Activated B cell treated with CpG ODN at 0.5 μM for 24 hours (primary cell): ENCODE measurements at regions of chr22 and their contacts with region 1.

Region 1: GRCh38 chr22:37019309-37020125 is at the starts of genes MPST and TST:
- DNase-seq: peak; percentile 64
- ATAC-seq: peak; percentile 80
- H3K4me3 Mint-ChIP-seq: peak within 1 kb of the TSS; percentile 92
- H3K27ac Mint-ChIP-seq: peak within 1 kb of the TSS; percentile 41
- H3K4me1 Mint-ChIP-seq: peaks cover 18% of the 10 kb centered on the region
- H3K27me3 Mint-ChIP-seq: no peaks in the 10 kb centered on the region
- CTCF ChIP-seq: no peak
- total RNA-seq, gene MPST: 15.6 and 17.7 TPM in 2 replicates
- total RNA-seq, gene TST: 7.2 TPM in 2 replicates

Region 2: DNA sequence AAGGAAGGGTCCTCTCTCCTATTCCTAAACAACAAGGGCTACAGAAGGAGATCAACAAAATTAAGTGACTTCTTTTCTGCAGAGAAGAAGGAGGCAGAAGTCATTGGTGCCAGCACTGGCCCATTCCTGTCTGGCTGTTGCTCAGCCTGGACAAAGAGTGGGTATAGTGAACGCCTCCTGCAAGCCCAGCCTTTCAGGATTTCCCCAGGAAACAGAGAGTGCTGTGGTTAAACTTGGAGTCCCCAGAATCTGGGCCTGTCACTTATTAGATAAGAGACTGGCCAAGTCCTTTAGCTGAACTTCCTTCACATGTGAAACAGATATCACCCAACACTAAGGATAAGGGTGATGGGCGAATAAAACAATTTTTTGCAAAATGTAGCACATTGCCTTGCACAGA is 11.2 kb before region 1 on chr22:
- CTCF ChIA-PET with region 1: interaction called, 5 read pairs
- POLR2A ChIA-PET with region 1: interaction called, 10 read pairs
- intact Hi-C with region 1: no loop called
- DNase-seq: no peak
- ATAC-seq: no peak
- H3K4me3 Mint-ChIP-seq: no peak overlapping the region
- H3K27ac Mint-ChIP-seq: no peak overlapping the region
- H3K4me1 Mint-ChIP-seq: no peaks in the 10 kb centered on the region
- H3K27me3 Mint-ChIP-seq: peaks cover 26% of the 10 kb centered on the region
- CTCF ChIP-seq: no peak

Region 3: GRCh38 chr22:37059876-37060449 is 40.4 kb after region 1 on chr22:
- CTCF ChIA-PET with region 1: no interaction called
- POLR2A ChIA-PET with region 1: no interaction called
- intact Hi-C with region 1: loop called (anchors 1 kb)
- DNase-seq: no peak
- ATAC-seq: no peak
- H3K4me3 Mint-ChIP-seq: no peak overlapping the region
- H3K27ac Mint-ChIP-seq: no peak overlapping the region
- H3K4me1 Mint-ChIP-seq: no peaks in the 10 kb centered on the region
- H3K27me3 Mint-ChIP-seq: no peaks in the 10 kb centered on the region
- CTCF ChIP-seq: no peak

Region 4: DNA sequence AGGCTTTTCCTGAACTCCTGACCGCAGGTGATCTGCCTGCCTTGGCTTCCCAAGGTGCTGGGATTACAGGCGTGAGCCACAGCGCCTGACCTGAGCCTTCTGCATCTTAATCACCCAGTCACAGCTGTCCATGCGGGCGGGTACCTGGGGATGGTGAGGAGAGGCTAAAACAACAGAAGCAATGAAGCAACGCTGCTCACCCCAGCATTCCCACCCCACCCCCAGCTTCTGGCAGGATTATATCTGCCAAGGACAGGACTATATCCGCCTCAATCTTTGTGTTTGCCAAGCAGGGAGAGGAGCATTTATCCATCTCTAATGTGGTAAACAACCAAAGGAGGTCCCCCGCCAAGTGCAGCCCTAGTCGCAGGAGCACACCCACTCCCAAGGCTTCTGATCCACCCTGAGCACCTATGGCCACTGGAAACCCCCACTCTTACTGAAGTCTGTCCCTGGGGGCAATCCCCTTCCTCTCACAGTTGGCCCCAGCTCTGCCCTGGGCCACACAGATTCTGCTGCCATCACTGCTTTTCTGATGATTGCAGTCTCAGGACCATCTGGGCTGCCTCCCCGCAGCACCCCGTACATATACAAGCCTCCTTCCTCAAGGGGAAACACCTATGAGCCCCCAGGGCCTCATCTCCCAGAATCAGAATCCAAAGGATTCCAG is 569.2 kb after region 1 on chr22:
- CTCF ChIA-PET with region 1: no interaction called
- POLR2A ChIA-PET with region 1: interaction called, 17 read pairs
- intact Hi-C with region 1: no loop called
- DNase-seq: no peak
- ATAC-seq: no peak
- H3K4me3 Mint-ChIP-seq: no peak overlapping the region
- H3K27ac Mint-ChIP-seq: no peak overlapping the region
- H3K4me1 Mint-ChIP-seq: peaks cover 11% of the 10 kb centered on the region
- H3K27me3 Mint-ChIP-seq: peaks cover 17% of the 10 kb centered on the region
- CTCF ChIP-seq: no peak